ENCODE measurements at regions of chr1 and their contacts with region 1.

Region 1: DNA sequence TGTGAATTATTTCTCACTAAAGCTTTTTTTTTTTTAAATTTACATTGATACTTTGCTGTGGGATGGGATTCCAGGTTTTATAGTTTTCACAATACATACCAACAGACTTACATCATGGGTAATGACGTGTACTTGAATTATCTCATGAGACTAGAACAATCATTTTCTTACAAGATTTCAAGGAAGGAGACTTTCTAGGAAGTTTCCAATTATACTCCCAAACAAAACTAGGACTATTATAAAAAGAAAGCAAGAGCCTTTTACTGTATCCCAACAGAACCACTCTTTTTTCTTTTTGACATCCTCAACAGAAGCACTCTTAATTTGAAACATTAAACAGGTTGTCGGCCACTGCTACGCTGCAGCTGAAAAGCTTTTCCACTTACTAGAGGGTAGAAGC is 48.7 kb downstream of the TESK2 start:
- DNase-seq: no peak
- ATAC-seq: no peak
- H3K4me3 ChIP-seq: no peak overlapping the region
- H3K27ac ChIP-seq: no peak overlapping the region
- H3K4me1 ChIP-seq: peaks cover 22% of the 10 kb centered on the region
- H3K27me3 ChIP-seq: no peaks in the 10 kb centered on the region
- CTCF ChIP-seq: no peak
- EP300 ChIP-seq: no peak
- POLR2A ChIP-seq: no peak
- RAD21 ChIP-seq: no peak

Region 2: DNA sequence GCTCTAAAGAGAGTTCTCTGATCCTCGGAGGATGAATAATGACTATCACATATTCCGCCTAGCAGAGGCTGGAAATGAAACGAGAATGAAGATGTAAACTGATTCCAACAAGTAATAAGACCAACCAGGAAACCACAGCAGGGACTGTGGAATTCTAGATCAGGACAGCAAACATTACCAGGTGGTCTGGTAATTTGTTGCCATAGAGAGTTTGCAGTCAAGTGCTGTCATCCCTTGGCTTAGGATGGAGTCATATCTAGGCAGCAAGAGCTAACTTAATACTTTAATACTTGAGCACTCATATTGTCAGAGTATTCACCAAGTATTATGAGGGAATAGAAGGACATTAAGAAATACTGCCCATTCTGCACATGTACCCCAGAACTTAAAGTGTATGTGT is 57.0 kb before region 1 on chr1:
- CTCF ChIA-PET with region 1: no interaction called
- POLR2A ChIA-PET with region 1: no interaction called
- in situ Hi-C with region 1: no loop called
- intact Hi-C with region 1: loop called (anchors 10 kb)
- DNase-seq: no peak
- ATAC-seq: no peak
- H3K4me3 ChIP-seq: no peak overlapping the region
- H3K27ac ChIP-seq: no peak overlapping the region
- H3K4me1 ChIP-seq: peaks cover 9% of the 10 kb centered on the region; the same call in 1 of the 2 replicates
- H3K27me3 ChIP-seq: no peaks in the 10 kb centered on the region
- CTCF ChIP-seq: no peak
- EP300 ChIP-seq: no peak
- POLR2A ChIP-seq: no peak
- RAD21 ChIP-seq: no peak

Measured in HepG2 (cell line).